ENCODE measurements at regions of chr9 and their contacts with region 1.

Region 1: DNA sequence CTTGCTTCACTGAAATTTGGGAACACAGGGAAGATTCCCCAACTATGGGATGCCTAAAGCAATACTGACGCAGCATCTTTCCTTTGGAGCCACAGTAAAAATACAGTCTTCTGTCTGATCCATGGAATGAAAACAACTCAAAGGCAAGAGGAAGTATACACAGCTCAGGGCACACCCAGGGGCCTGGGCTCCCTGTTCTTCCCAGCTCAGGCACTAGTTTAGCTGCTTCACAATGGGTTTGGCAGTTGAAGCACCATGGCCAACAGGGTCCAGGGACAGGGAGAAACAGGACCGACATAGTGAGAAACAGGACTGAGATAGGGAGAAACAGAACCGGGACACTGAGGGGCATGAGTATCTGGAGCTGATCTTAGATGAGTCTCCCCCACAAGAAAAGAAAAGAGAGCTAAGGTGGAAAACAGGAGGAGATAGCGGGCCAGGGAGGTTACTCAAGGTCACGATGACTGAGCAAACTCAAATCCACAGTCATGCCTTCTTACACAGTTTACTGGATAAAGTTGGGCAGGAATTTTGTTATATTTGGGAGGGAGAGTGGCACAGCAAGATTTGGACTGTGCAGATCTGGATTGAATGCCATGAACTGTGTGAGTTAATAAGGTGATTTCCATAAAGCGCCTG is 198.8 kb downstream of the SMARCA2 start:
- DNase-seq: no peak
- ATAC-seq: no peak
- H3K4me3 ChIP-seq: no peak overlapping the region
- H3K27ac ChIP-seq: no peak overlapping the region
- H3K4me1 ChIP-seq: peaks cover 10% of the 10 kb centered on the region
- H3K27me3 ChIP-seq: no peaks in the 10 kb centered on the region
- CTCF ChIP-seq: no peak
- EP300 ChIP-seq: no peak
- POLR2A ChIP-seq: no peak
- RAD21 ChIP-seq: no peak

Region 2: GRCh38 chr9:2140600-2141223 is 73.2 kb before region 1 on chr9:
- CTCF ChIA-PET with region 1: no interaction called
- POLR2A ChIA-PET with region 1: no interaction called
- RAD21 ChIA-PET with region 1: no interaction called
- SMC1A ChIA-PET with region 1: no interaction called
- in situ Hi-C with region 1: no loop called
- intact Hi-C with region 1: no loop called
- DNase-seq: no peak
- ATAC-seq: no peak
- H3K4me3 ChIP-seq: no peak overlapping the region
- H3K27ac ChIP-seq: no peak overlapping the region
- H3K4me1 ChIP-seq: no peaks in the 10 kb centered on the region
- H3K27me3 ChIP-seq: no peaks in the 10 kb centered on the region
- CTCF ChIP-seq: no peak
- EP300 ChIP-seq: no peak
- POLR2A ChIP-seq: no peak
- RAD21 ChIP-seq: no peak

Region 3: DNA sequence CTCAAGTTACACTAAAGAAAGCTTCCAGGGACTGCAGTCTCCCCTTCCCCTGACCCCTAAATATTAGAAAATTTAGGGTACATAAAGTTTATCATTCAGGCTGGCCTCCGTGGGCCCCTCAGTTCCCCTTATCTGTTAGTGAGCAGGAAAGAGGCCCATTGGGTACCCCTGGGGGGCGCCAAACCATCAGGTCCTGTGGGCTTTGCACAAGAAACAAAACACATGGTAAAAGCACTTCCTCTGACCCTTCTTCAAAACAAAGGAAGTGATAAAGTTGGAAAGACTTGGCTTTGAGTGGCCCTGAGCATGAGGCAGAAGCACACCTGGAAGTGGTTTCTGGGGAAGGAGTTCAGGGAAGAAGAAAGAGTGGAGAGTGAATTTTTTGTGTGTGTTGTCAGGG is 14.2 kb after region 1 on chr9:
- CTCF ChIA-PET with region 1: interaction called, 3 read pairs
- POLR2A ChIA-PET with region 1: no interaction called
- RAD21 ChIA-PET with region 1: interaction called, 4 read pairs
- SMC1A ChIA-PET with region 1: interaction called, 10 read pairs
- in situ Hi-C with region 1: no loop called
- intact Hi-C with region 1: no loop called
- DNase-seq: no peak
- ATAC-seq: peak; percentile 64
- H3K4me3 ChIP-seq: no peak overlapping the region
- H3K27ac ChIP-seq: no peak overlapping the region
- H3K4me1 ChIP-seq: peaks cover 16% of the 10 kb centered on the region
- H3K27me3 ChIP-seq: no peaks in the 10 kb centered on the region
- CTCF ChIP-seq: peak; percentile 21 to 42 (median 33); a peak in 4 of 6 replicates
- EP300 ChIP-seq: no peak
- POLR2A ChIP-seq: no peak
- RAD21 ChIP-seq: peak; percentile 51

Measured in GM12878 (cell line).